Dorsolateral prefrontal cortex (tissue), 120 donors: ENCODE measurements at regions of chr15 and their contacts with region 1.

Region 1: GRCh38 chr15:37709669-37710068 is 224.8 kb upstream of the TMCO5A start:
- DNase-seq: no peak
- H3K4me3 ChIP-seq: no peak overlapping the region
- H3K27ac ChIP-seq: no peak overlapping the region
- H3K27me3 ChIP-seq: peaks cover 0 to 4% (median 0%) of the 10 kb centered on the region in 45 donors
- CTCF ChIP-seq: no peak

Region 2: DNA sequence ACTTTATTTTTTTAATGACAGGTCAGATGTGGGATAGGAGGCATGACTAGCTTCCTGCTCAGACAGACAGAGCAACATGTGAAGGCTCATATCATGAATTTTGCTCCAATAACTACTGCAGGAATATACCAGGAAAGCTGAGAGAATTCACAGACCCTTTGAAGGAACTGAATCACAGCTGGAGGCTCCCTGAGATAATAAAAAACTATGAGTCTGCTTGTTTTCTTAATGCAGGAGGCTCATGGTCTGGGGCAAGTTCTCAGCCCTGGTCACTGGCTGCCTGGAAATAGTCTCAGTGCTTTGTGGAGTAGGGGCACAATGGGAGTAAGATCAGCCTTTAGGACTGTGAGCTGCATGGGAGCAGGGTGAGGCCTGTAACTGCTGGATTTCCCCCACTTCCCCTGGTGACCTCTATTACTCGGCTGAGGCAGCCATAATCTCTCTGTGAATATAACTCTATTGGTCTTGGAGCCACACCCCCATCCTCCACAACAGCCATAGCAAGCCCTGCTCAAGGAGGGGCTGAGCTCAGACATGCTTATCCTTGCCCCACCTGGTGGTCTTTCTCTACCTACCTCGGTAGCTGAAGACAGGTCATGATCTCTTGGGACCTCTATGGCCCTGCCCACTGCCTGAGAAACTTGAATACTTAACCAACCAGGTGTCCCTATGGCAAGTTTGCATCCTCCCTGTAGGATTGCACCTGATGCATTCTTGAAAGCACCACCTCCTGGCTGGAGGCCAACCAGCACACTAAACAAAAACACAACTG is 56.8 kb before region 1 on chr15:
- intact Hi-C with region 1: loop called in 1 of 2 experiments (anchors 10 kb)
- DNase-seq: no peak
- H3K4me3 ChIP-seq: no peak overlapping the region
- H3K27ac ChIP-seq: no peak overlapping the region
- H3K27me3 ChIP-seq: peaks cover 0 to 2% (median 0%) of the 10 kb centered on the region in 45 donors
- CTCF ChIP-seq: no peak